Sigmoid colon (tissue), 7 donors: ENCODE measurements at regions of chrX and their contacts with region 1.

Region 1: DNA sequence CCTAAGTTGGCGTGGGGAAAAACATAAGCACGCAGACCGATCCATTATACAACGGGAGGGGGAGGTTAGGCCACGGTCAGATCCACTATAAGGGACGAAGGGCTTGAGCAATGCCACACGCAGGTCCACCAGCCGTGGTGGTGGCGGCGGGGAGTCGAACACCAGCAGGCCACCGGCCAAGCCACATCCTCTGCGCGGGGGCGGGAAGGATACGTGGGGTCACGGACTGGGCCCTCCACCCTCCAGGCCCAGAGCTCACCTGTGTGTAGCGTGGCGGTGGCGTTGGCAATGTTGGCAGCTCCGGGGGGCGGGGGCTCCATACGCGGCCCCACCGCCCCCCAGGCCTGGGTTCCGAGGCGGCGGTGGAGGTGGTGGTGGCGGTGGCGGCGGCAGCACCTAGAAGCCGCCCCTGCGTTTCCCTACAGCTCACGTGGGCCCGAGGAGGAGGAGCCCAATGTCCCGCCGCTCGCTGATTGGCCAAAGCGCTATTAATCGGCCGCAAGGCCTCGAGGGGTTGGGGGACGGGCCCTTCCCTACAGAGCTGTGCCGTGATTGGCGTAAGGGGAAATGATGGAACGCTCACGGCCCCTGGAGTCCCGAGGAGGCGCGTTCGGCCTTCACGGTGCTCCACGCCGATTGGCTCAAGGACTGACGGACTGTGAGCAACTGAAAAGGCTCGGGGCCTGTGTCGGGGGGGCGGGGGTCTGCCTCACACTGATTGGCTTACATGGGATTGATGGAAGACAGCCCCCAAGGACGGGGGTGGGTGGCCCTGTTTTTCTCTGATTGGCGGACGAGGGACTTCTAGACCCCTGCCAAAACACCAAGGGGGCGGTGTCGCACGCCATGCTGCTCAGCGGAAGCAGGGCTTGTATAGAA is at the start of gene ELK1:
- DNase-seq: peak; percentile 99
- H3K4me3 ChIP-seq: peak within 1 kb of the TSS; percentile 51 to 73 (median 70)
- H3K27ac ChIP-seq: peak within 1 kb of the TSS; percentile 86 to 92 (median 88)
- H3K4me1 ChIP-seq: peaks cover 0 to 18% (median 12%) of the 10 kb centered on the region in 4 donors
- H3K27me3 ChIP-seq: no peaks in the 10 kb centered on the region
- CTCF ChIP-seq: no peak
- EP300 ChIP-seq: no peak
- POLR2A ChIP-seq: peak; percentile 43 to 50
- total RNA-seq, gene ELK1: 12.1 to 18.8 (median 16.8) TPM

Region 2: GRCh38 chrX:47467131-47467530 is 183.3 kb before region 1 on chrX:
- intact Hi-C with region 1: no loop called
- DNase-seq: no peak
- H3K4me3 ChIP-seq: no peak overlapping the region
- H3K27ac ChIP-seq: no peak overlapping the region
- H3K4me1 ChIP-seq: no peaks in the 10 kb centered on the region
- H3K27me3 ChIP-seq: no peaks in the 10 kb centered on the region
- CTCF ChIP-seq: no peak
- EP300 ChIP-seq: no peak
- POLR2A ChIP-seq: no peak

Region 3: GRCh38 chrX:47540754-47541538 is 109.5 kb before region 1 on chrX:
- intact Hi-C with region 1: loop called (anchors 5 kb)
- DNase-seq: peak; percentile 93
- H3K4me3 ChIP-seq: no peak overlapping the region
- H3K27ac ChIP-seq: peak overlapping the region; percentile 72 to 81 (median 78)
- H3K4me1 ChIP-seq: peaks cover 0 to 18% (median 2%) of the 10 kb centered on the region in 4 donors
- H3K27me3 ChIP-seq: no peaks in the 10 kb centered on the region
- CTCF ChIP-seq: peak; percentile 31 to 60 (median 45)
- EP300 ChIP-seq: peak in 1 of 4 donors; percentile 39
- POLR2A ChIP-seq: no peak

Region 4: DNA sequence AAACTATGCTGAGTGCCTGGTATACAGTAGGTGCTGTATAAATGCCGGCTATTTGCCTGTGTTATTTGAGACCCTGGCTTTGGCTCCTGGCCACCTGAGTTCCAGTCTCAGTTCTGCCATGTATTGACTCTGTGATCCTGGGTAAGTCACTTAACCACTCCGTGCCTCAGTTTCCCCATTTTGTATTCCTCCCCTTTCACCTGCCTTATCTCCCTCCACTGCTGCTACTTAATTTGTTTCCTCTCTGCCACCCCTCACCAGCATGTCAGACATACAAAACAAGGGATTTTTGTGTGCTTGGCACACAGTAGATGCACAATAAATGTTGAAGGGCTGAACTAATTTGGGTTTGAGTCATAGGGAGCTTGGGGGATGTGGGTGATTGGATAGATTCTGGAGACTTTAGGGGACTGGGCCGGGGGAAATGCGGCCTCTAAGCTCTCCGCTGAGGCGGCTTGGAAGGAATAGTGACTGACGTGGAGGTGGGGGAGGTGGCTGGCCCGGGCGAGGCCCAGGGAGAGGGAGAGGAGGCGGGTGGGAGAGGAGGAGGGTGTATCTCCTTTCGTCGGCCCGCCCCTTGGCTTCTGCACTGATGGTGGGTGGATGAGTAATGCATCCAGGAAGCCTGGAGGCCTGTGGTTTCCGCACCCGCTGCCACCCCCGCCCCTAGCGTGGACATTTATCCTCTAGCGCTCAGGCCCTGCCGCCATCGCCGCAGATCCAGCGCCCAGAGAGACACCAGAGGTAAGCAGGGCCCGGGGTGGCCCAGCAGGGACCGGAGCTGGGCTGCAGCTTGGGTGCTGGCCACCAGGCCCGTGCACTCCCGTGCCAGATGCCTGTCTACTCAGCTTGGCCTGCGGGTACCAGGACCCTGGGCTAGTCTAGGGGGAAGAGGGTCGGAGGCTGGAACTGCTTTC is 68.4 kb before region 1 on chrX and contains the start of gene TIMP1:
- intact Hi-C with region 1: loop called (anchors 5 kb)
- DNase-seq: peak; percentile 97
- H3K4me3 ChIP-seq: peak within 1 kb of the TSS; percentile 30 to 54 (median 52)
- H3K27ac ChIP-seq: peak within 1 kb of the TSS; percentile 82 to 86 (median 84)
- H3K4me1 ChIP-seq: peaks cover 0 to 11% (median 4%) of the 10 kb centered on the region in 4 donors
- H3K27me3 ChIP-seq: no peaks in the 10 kb centered on the region
- CTCF ChIP-seq: no peak
- EP300 ChIP-seq: no peak
- POLR2A ChIP-seq: no peak
- total RNA-seq, gene TIMP1: 105 to 158 (median 115) TPM